ENCODE measurements at regions of chr1 and their contacts with region 1.

Region 1: DNA sequence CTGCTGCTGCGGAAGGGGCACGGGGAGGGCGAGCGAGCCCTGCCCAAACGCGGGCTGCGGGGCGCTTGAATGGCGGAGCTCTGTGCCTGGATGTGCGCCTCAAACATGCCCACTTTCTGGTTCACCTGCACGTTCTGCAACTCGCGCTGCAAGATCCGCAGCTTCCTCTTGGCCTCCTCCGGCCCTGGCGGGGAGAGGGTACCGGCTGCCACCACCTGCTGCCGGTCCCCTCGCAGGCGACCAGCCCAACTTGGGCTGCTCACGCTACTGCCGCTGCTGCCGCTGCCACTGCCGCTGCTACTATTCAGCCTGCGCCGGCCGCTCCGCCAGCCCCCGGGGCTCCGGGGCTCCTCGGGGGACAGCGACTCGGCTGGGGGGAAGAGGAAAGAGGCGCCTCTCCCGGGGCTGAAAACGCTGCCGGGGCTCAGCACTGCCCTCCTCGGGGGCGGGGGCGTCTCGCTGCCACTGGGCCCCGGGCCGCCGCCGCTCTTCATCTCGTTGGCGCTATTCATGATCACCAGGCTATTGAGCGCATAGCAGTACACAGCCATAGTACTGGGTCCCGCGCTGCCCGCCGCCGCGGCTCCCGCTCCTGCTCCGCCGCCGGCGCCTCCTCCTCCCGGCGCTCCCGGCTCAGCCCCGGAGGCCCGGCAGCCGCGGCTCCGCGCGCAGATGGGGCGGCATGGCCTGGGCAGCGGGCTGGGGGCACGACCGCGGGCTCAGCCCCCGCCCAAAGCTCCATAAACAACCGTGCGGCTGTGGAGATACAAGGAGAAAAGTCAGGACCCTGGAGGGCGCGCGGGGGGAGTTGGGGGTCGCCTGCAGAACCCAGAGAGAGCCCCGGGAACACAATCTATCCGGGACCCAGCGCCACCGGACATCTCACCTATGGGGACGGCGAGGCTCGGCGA is 1.9 kb downstream of the ITPKB start:
- DNase-seq: peak; percentile 66
- ATAC-seq: peak; percentile 53

Region 2: GRCh38 chr1:226649780-226650179 is 87.4 kb before region 1 on chr1:
- intact Hi-C with region 1: loop called (anchors 5 kb)
- DNase-seq: peak; percentile 41
- ATAC-seq: no peak

Region 3: DNA sequence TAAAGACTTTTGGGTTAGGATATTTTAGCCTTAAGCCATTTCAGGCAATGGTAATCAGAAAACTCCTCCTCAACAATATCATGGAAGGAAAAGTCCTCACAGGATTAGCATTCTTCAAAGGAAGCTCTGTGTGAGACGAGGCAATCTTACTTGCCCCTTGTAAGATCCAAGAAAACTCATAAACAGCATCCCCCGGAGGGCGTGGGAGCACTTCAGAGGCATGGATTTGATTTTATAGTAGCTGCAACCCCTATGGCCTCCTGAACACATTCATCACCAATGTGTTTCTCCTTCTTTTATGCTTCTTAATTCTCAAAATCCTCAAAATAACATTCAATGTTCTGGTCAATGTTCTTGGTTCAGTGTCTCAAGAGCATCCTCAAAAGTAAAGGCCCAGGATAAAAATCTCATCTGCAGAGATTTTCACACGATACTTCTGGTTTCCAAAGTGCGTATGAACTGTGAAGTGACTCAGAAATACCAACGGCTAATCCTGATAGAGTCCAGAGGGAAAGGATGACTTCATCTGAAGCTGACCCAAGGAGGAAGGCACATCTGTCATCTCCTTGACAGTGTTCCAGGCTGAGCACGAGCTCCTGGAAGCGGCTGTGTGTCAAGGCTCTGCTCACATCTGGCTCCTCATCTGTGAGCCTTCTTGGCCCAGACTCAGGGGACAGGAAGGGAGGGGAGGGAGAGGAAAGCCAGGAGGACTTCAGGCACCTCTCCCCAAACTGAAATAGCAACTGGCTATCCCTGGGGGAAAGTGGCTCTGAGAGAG is 84.0 kb after region 1 on chr1:
- intact Hi-C with region 1: loop called (anchors 5 kb)
- DNase-seq: peak; percentile 78
- ATAC-seq: peak; percentile 93